OCI-LY7 (cell line): ENCODE measurements at regions of chr10 and their contacts with region 1.

Region 1: DNA sequence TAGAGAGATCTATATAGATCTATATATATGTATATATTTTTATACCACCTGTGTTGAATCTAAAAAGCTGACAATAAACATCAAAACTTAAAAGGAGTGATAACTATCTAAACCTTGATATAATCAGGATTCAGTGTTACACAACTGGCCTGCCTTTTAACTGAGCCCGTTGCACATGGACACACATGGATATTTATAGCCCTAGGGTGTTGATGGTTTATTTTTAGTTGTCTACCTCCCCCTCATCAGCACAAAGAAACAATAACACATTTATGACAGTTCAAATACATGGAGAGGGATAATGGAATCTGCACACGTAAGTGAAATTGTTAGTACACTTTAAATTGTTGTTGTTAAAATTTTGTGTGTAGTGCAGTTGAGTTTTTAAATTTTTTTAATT is 336.9 kb downstream of the ZNF248 start:
- DNase-seq: no peak
- H3K4me3 ChIP-seq: no peak overlapping the region
- H3K27ac ChIP-seq: no peak overlapping the region
- H3K4me1 ChIP-seq: no peaks in the 10 kb centered on the region
- CTCF ChIP-seq: no peak

Region 2: GRCh38 chr10:37448161-37448560 is 72.3 kb before region 1 on chr10:
- CTCF ChIA-PET with region 1: no interaction called
- POLR2A ChIA-PET with region 1: no interaction called
- intact Hi-C with region 1: no loop called
- DNase-seq: no peak
- H3K4me3 ChIP-seq: no peak overlapping the region
- H3K27ac ChIP-seq: no peak overlapping the region
- H3K4me1 ChIP-seq: no peaks in the 10 kb centered on the region
- CTCF ChIP-seq: no peak

Region 3: DNA sequence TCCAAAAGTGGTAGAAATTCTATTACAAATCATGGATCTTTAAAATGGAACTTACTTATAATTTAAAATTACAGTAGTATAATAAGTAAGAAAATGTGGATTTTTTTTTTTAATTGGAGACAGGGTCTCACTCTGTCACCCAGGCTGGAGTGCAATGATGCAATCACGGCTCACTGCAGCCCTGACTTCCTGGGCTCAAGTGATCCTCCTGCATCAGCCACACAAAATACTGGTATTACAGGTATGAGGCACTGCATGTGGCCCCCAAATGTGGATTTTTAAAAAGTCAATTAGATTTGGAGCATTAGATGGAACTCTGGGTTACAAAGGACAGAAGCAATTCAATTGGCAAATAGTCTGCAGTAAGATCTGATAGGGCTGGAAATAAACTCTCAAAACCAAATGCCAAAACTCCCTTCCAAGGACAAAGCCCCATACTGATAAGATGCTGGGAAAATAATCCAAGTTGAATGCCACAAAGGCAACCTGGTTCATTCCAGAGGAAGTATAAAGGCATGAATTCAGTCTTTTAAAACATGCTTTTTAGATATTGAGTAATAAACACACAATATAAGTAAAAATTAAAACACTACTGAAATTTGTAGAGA is 42.7 kb after region 1 on chr10:
- CTCF ChIA-PET with region 1: no interaction called
- POLR2A ChIA-PET with region 1: no interaction called
- intact Hi-C with region 1: no loop called
- DNase-seq: no peak
- H3K4me3 ChIP-seq: no peak overlapping the region
- H3K27ac ChIP-seq: no peak overlapping the region
- H3K4me1 ChIP-seq: no peaks in the 10 kb centered on the region
- CTCF ChIP-seq: no peak

Region 4: DNA sequence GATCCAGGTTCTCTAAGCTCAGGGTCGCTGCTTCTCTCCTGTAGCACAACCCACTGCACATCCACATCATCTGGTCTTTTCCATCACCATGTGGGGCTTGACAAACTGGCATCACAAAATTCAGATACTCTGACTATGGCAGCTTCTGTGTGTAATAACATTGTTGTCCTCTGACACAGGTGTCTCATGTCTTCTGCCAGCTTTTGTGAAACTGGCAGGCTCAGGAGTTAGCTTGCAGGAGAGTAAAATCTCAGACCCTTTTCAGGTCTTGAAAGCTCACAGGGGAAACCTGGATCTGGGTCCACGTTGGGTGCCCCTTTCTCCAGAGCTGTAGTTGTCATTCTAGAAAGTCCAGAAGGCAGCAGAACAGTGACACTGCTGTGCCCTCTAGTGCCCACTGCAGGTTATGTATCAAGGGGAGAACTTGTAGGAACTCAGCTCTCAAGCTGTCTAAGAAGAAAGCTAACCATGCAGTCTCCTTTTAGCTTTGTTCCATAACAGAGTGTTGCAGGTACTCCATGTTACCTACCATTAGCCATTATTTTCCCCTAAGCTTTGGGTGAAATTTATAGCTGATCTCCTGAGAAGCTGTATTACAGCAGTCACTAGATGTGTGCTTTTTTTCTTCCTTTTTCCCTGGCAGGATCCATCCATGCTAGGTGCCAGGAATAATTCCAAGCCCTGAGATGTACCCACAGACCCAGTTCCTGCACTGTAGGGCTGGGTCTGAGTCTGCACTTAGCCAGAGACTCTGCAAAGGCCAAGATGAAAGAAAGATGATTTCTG is 234.2 kb after region 1 on chr10:
- CTCF ChIA-PET with region 1: no interaction called
- POLR2A ChIA-PET with region 1: no interaction called
- intact Hi-C with region 1: loop called (anchors 10 kb)
- DNase-seq: peak; percentile 55
- H3K4me3 ChIP-seq: no peak overlapping the region
- H3K27ac ChIP-seq: no peak overlapping the region
- H3K4me1 ChIP-seq: no peaks in the 10 kb centered on the region
- CTCF ChIP-seq: peak; percentile 81